ENCODE measurements at regions of chr6 and their contacts with region 1.

Region 1: GRCh38 chr6:52284460-52285176 is at the start of gene MCM3:
- DNase-seq: peak; percentile 95
- CTCF ChIP-seq: no peak

Region 2: GRCh38 chr6:51684038-51684437 is 600.6 kb before region 1 on chr6:
- CTCF ChIA-PET with region 1: no interaction called
- POLR2A ChIA-PET with region 1: no interaction called
- DNase-seq: no peak
- CTCF ChIP-seq: no peak

Region 3: GRCh38 chr6:52207066-52207465 is 77.6 kb before region 1 on chr6:
- CTCF ChIA-PET with region 1: no interaction called
- POLR2A ChIA-PET with region 1: no interaction called
- DNase-seq: no peak
- CTCF ChIP-seq: no peak

Region 4: GRCh38 chr6:52299653-52300052 is 15.0 kb after region 1 on chr6:
- CTCF ChIA-PET with region 1: interaction called, 29 read pairs
- POLR2A ChIA-PET with region 1: interaction called, 4 read pairs
- DNase-seq: no peak
- CTCF ChIP-seq: no peak

Region 5: GRCh38 chr6:52333840-52334200 is 49.2 kb after region 1 on chr6:
- CTCF ChIA-PET with region 1: interaction called, 10 read pairs
- POLR2A ChIA-PET with region 1: no interaction called
- DNase-seq: no peak
- CTCF ChIP-seq: no peak

Region 6: DNA sequence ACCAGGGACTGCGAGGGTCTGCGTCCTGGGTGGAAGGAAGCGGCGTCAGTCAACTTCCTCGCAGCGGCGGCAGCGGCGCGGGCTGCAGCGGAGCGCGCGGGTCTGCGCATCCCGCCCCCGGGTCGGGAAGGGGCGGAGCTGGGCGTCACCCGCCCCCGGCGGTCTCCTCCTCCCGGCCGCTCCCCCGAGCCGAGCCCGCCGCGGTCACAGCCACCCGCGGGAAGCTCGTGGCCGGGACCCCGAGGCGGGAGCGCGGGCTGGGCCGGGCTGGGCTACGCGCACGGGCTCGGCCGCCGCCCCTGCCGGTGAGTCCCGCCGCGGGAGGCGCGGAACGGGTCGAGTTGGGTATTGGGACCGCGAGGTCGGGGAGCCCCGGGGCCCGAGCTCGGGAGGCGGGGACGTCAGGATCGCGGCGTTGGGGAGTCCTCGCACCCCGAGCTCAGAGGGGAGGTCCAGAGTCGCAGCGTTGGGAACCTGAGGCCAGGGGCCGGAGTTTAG is 77.4 kb after region 1 on chr6 and contains the start of gene PAQR8:
- CTCF ChIA-PET with region 1: interaction called, 25 read pairs
- POLR2A ChIA-PET with region 1: no interaction called
- DNase-seq: peak; percentile 95
- CTCF ChIP-seq: no peak

Region 7: GRCh38 chr6:52389626-52390360 is 105.2 kb after region 1 on chr6:
- CTCF ChIA-PET with region 1: interaction called, 195 read pairs
- POLR2A ChIA-PET with region 1: no interaction called
- DNase-seq: peak; percentile 56
- CTCF ChIP-seq: no peak

Region 8: GRCh38 chr6:52419809-52420670 is 135.4 kb after region 1 on chr6 and contains the start of gene EFHC1:
- CTCF ChIA-PET with region 1: interaction called, 25 read pairs
- POLR2A ChIA-PET with region 1: interaction called, 3 read pairs
- DNase-seq: peak; percentile 96
- CTCF ChIP-seq: no peak